ENCODE measurements at regions of chr5 and their contacts with region 1.

Region 1: DNA sequence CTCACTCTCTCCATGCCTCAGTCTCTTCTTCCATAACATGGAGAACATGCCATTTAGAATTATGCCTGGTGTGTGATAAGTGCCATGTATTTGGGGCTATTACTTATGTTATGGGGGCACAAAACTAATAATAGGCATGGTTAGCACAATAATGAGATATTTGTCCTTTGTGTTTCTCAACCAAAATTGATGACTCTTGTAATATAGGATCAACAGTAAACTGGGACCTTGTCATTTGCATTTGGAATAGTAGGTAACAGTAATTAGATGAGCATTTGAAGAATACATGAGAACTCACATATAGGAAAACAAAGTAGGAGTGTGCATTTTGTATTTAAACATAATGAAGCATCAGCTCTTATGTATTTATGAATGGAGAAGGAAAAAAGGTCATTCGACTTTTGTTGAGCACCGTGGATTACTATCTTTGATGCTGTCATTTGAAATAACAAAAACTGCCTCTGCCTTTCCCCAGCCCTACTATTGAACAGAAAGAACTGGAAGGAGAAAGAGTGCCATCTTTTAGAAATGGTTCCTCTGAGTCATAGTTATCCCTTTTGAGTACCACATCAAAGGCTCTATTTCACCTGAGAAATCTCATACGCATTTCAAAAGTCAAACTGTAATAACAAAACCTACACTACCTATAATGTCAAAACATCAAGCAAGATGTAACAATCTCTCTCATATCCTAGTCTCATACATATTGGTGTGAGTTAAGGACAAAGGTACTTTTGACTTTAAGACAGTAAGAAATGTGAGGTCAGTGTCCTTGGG is 655.2 kb downstream of the PDE4D start:
- DNase-seq: peak; percentile 35
- H3K4me3 Mint-ChIP-seq: no peak overlapping the region
- H3K27ac Mint-ChIP-seq: no peak overlapping the region
- H3K4me1 Mint-ChIP-seq: peaks cover 22% of the 10 kb centered on the region
- H3K27me3 Mint-ChIP-seq: peaks cover 38% of the 10 kb centered on the region

Region 2: DNA sequence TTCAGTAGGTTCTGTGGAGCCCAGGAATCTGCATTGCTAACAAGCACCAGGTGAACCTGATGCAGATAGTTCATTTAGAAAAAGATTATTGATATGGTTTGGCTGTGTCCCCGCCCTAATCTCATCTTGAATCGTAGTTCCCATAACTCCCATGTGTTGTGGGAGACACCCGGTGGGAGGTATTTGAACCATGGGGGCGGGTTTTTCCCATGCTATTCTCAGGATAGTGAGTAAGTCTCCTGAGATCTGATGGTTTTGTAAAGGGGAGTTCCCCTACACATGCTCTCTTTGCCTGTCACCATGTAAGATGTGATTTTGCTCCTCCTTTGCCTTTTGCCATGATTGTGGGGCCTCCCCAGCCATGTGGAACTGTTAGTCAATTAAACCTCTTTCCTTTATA is 443.4 kb before region 1 on chr5:
- CTCF ChIA-PET with region 1: no interaction called
- intact Hi-C with region 1: loop called (anchors 2 kb)
- DNase-seq: peak; percentile 84
- H3K4me3 Mint-ChIP-seq: no peak overlapping the region
- H3K27ac Mint-ChIP-seq: no peak overlapping the region
- H3K4me1 Mint-ChIP-seq: peaks cover 6% of the 10 kb centered on the region
- H3K27me3 Mint-ChIP-seq: peaks cover 5% of the 10 kb centered on the region

Region 3: DNA sequence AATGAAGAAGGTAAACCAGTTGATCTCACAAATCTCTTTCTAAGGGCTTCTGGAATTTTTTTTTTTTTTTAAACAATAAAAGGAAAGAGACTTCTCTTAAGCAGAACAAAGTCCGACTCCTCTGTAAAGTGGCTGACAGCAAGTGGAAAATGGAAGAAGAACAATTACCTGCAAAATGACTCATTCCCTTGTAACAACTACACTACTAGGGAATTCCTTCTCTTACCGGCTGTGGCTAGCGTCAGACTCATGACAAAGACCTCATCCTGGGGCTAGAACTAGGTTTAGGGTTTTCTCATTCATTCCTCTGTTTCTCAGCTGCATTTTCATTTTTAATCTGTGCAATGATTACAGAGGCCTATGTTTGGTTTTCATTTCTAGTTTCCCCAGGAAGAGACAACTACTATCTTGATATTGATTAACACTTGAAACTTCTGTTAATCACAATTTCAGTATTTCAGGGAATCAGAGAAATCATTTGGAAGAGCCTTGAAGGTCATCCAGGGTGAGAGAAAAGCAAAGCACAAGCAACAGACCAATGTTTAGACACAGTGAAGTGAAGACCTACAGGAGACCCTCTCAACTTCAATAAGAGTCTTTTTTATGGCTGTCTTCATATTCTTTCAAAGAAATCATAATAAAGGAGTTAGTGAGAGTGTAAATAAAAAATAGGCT is 217.6 kb before region 1 on chr5:
- CTCF ChIA-PET with region 1: no interaction called
- intact Hi-C with region 1: loop called (anchors 1 kb)
- DNase-seq: peak; percentile 76
- H3K4me3 Mint-ChIP-seq: peak overlapping the region; percentile 42
- H3K27ac Mint-ChIP-seq: peak overlapping the region; percentile 89
- H3K4me1 Mint-ChIP-seq: peaks cover 57% of the 10 kb centered on the region
- H3K27me3 Mint-ChIP-seq: no peaks in the 10 kb centered on the region

Region 4: DNA sequence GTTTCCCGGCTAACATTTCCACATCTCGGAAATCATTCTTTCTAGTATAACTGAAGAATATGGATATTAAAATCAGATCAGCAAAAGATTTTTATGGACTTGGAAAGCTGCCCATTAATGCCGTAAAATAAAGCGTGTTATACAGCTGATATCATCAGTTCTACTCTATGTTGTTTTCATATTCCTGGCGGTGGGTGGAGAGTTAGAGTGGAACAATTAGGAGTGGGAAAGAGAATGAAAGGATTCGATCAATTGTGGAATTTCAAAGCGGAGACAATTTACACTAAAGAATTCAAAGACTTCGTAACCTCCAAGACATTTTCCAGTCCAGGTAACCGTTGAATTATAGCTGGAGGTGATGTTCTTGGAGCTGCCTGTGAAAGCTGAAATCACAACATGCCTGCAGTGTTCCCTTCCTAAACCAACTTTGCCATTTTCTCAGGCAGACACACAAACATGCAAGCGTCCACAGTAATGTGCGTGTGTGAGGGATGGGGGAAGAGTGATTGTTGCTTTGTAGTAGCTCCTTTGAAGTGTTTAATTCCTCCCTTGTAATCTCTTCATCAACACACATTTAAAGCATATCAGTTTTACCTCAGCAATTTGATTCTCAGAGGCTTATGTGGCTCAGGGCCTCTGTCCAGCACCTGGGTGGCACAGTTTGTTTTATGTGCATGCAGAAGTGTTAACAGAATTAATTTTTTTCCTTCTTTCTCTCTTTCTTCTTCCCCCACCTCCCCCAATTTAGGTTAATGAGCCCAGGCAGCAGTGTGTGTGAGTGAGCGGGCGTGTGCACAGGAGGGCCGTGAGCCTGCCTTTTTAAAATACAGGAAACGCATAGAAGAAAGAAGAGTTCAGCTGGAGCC is 111.4 kb before region 1 on chr5:
- CTCF ChIA-PET with region 1: no interaction called
- intact Hi-C with region 1: loop called (anchors 1 kb)
- DNase-seq: no peak
- H3K4me3 Mint-ChIP-seq: no peak overlapping the region
- H3K27ac Mint-ChIP-seq: no peak overlapping the region
- H3K4me1 Mint-ChIP-seq: peaks cover 27% of the 10 kb centered on the region
- H3K27me3 Mint-ChIP-seq: no peaks in the 10 kb centered on the region

Region 5: DNA sequence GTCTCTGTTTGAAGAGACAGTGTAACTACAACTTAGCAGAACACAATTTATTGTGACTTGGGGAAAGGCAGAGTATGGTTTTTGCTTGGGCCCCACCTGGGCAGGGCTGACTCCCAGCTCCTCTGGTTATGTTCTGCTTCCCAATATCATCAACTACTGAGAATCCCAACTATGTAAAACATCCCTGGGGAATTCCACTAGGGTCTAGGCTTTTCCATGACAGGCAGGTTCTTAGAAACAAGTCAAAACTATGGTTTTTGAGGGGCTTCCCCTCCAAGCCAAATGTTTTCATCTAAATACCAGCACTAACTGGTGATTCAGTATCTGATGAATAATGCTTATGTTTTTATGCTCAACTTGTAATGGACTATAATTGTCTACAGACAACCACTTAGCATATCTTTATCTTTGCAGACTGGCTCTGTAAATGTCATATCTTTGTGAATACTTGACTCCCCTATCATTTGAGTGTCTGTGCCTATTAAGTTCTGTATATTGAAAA is 245.7 kb after region 1 on chr5:
- CTCF ChIA-PET with region 1: no interaction called
- intact Hi-C with region 1: loop called (anchors 1 kb)
- DNase-seq: peak; percentile 25
- H3K4me3 Mint-ChIP-seq: no peak overlapping the region
- H3K27ac Mint-ChIP-seq: peak overlapping the region; percentile 17
- H3K4me1 Mint-ChIP-seq: peaks cover 19% of the 10 kb centered on the region
- H3K27me3 Mint-ChIP-seq: peaks cover 2% of the 10 kb centered on the region

Region 6: DNA sequence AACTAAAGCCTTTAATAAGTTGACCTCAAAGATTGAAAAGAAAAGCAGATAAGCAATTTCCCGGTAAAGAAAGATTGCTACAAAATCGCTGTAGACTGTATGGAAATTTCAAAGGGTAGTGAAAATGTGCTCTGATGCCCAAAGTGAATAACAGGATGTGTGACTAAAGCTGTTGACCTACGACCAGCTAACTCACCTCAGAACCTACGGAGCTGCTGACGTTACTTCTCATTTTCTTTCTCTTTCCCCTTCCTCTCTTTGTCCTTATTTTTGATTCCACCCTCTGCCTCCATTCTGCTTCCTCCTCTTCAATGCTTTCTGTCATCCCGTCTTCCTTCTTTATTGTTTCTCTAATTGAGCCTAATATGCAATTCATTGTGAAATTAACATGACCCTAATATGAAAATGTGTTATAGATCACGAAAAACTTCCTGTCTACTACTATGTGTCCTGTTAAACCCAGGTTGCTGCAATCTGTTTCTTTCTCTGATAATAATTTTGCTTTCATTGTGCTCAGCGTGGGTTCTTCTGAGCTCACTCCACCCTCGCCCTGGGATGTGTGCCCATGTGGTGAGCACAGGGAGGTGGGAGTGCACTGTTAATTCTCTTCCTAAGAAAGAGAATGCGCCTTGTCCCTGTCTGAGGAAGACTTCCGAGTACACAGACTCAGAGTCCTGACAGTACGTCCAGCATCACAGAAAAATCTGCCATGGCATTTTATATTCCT is 552.2 kb after region 1 on chr5:
- CTCF ChIA-PET with region 1: no interaction called
- intact Hi-C with region 1: loop called (anchors 5 kb)
- DNase-seq: no peak
- H3K4me3 Mint-ChIP-seq: peak overlapping the region; percentile 40
- H3K27ac Mint-ChIP-seq: peak overlapping the region; percentile 68
- H3K4me1 Mint-ChIP-seq: peaks cover 20% of the 10 kb centered on the region
- H3K27me3 Mint-ChIP-seq: peaks cover 24% of the 10 kb centered on the region

Measured in activated naive CD4-positive, alpha-beta T cell treated with anti-CD3 and anti-CD28 coated beads for 36 hours (primary cell).